ENCODE measurements at regions of chr3 and their contacts with region 1.

Region 1: GRCh38 chr3:171358181-171358880 is 101.9 kb downstream of the TNIK start:
- DNase-seq: no peak
- H3K4me3 Mint-ChIP-seq: no peak overlapping the region
- H3K27ac Mint-ChIP-seq: peak overlapping the region; percentile 78
- H3K4me1 Mint-ChIP-seq: peaks cover 73% of the 10 kb centered on the region
- H3K27me3 Mint-ChIP-seq: no peaks in the 10 kb centered on the region
- CTCF ChIP-seq: no peak

Region 2: GRCh38 chr3:171257251-171258203 is 100.8 kb before region 1 on chr3:
- CTCF ChIA-PET with region 1: interaction called, 3 read pairs
- intact Hi-C with region 1: loop called (anchors 5 kb)
- DNase-seq: no peak
- H3K4me3 Mint-ChIP-seq: no peak overlapping the region
- H3K27ac Mint-ChIP-seq: no peak overlapping the region
- H3K4me1 Mint-ChIP-seq: peaks cover 85% of the 10 kb centered on the region
- H3K27me3 Mint-ChIP-seq: no peaks in the 10 kb centered on the region
- CTCF ChIP-seq: no peak

Region 3: GRCh38 chr3:171522651-171523050 is 164.3 kb after region 1 on chr3:
- CTCF ChIA-PET with region 1: no interaction called
- intact Hi-C with region 1: loop called (anchors 5 kb)
- DNase-seq: no peak
- H3K4me3 Mint-ChIP-seq: no peak overlapping the region
- H3K27ac Mint-ChIP-seq: no peak overlapping the region
- H3K4me1 Mint-ChIP-seq: peaks cover 50% of the 10 kb centered on the region
- H3K27me3 Mint-ChIP-seq: no peaks in the 10 kb centered on the region
- CTCF ChIP-seq: no peak

Measured in Calu3 (cell line).